HepG2 (cell line): ENCODE measurements at regions of chr5 and their contacts with region 1.

Region 1: DNA sequence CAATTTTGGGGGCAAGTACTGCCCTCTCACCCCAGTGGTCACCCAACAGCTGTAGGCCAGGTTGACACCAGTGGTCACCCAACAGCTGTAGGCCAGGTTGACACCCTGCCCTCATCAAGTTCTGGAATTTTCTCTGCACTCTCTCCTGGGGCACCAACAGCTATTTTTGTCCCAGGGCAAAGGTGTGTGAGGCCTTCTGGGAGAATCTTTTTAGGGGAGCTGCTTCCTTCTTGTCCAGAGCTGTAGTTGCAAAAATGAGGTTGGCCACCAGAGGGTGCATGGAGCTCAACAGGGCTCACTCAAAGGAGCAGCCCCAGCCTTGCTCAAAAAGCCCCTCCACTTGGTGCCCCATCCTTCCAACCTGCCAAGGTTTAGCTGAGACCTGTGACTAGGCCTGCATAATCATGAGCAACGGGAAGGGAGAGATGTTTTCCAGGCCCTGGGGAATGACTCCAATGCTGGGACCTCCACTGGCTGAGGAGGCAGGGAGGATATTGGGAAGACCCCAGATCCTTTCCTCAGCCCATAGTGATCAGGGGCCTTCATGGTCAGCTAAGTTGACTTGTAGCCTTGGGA is 10.6 kb upstream of the P4HA2 start:
- DNase-seq: peak; percentile 41
- ATAC-seq: peak; percentile 87
- H3K4me3 ChIP-seq: no peak overlapping the region
- H3K27ac ChIP-seq: no peak overlapping the region
- H3K4me1 ChIP-seq: no peaks in the 10 kb centered on the region
- H3K27me3 ChIP-seq: no peaks in the 10 kb centered on the region; a peak in 3 of 5 replicates
- CTCF ChIP-seq: peak; percentile 80
- EP300 ChIP-seq: no peak
- POLR2A ChIP-seq: no peak
- RAD21 ChIP-seq: peak; percentile 54; the same call in 1 of the 2 replicates

Region 2: DNA sequence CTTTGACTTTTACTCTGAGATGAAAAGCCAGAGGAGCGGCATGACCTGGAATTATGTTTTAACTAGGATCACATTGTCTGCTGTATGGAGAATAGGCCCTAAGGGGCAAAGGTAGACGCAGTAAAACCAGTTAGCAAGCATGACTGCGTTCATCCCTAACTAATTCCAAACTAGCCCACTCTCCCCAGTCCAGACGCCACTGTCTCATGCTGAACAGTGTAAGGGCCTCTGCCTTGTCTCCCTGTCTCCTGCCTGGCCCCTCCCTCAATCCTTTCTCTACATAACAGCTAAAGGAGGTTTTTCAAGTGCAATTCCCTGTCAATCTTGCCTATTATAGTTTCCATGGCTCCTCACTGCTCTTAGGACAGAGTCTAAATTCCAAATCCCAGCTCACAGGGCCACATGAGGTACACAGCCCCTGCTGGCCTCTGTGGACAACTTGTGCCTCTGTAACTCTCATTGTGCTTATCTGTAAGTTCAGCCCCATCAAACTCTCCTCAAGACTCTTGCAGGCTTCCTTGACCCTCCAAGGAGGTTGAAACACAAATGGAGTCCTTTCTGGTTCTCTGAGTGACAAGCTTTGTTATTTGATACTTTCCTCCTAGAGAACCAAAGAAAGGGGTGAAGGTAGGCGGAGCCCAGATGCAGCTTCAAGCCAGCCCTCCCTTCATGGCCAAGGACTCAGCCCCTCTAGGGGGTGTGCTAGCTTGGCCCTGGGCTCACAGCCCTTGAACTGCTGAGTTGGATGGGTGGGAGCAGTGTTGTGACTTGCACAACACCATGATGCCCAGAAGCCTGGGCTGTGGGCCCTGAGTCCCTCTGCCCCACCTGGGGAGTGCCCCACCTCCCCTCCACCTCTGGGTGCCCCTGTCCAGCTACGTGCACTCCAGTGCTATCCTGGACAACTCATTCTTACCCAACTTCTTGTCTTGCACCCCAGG is 40.0 kb after region 1 on chr5:
- CTCF ChIA-PET with region 1: interaction called, 8 read pairs
- POLR2A ChIA-PET with region 1: no interaction called
- in situ Hi-C with region 1: no loop called
- intact Hi-C with region 1: loop called (anchors 2 kb)
- DNase-seq: peak; percentile 63
- ATAC-seq: peak; percentile 84
- H3K4me3 ChIP-seq: peak overlapping the region in 1 of 3 experiments; percentile 38; a peak in 2 of 6 replicates
- H3K27ac ChIP-seq: peak overlapping the region; percentile 78
- H3K4me1 ChIP-seq: peaks cover 31% of the 10 kb centered on the region
- H3K27me3 ChIP-seq: no peaks in the 10 kb centered on the region; a peak in 1 of 5 replicates
- CTCF ChIP-seq: peak; percentile 8; the same call in 1 of the 2 replicates
- EP300 ChIP-seq: peak in 1 of 2 experiments; percentile 19; a peak in 1 of 4 replicates
- POLR2A ChIP-seq: no peak
- RAD21 ChIP-seq: no peak